Heart right ventricle (tissue), 16 donors: ENCODE measurements at regions of chr1 and their contacts with region 1.

Region 1: GRCh38 chr1:113978863-113979702 is at the start of gene OLFML3:
- DNase-seq: peak; percentile 70 to 92
- ATAC-seq: peak; percentile 66 to 83 (median 74)
- H3K4me3 ChIP-seq: peak within 1 kb of the TSS in 9 of 10 donors; percentile 10 to 48 (median 44)
- H3K27ac ChIP-seq: peak within 1 kb of the TSS in 9 of 10 donors; percentile 14 to 76 (median 61)
- H3K4me1 ChIP-seq: peaks cover 0 to 75% (median 69%) of the 10 kb centered on the region in 9 donors
- H3K27me3 ChIP-seq: no peaks in the 10 kb centered on the region
- CTCF ChIP-seq: peak; percentile 40 to 87 (median 74)
- total RNA-seq, gene OLFML3: 6.1 to 19.7 (median 11.0) TPM

Region 2: DNA sequence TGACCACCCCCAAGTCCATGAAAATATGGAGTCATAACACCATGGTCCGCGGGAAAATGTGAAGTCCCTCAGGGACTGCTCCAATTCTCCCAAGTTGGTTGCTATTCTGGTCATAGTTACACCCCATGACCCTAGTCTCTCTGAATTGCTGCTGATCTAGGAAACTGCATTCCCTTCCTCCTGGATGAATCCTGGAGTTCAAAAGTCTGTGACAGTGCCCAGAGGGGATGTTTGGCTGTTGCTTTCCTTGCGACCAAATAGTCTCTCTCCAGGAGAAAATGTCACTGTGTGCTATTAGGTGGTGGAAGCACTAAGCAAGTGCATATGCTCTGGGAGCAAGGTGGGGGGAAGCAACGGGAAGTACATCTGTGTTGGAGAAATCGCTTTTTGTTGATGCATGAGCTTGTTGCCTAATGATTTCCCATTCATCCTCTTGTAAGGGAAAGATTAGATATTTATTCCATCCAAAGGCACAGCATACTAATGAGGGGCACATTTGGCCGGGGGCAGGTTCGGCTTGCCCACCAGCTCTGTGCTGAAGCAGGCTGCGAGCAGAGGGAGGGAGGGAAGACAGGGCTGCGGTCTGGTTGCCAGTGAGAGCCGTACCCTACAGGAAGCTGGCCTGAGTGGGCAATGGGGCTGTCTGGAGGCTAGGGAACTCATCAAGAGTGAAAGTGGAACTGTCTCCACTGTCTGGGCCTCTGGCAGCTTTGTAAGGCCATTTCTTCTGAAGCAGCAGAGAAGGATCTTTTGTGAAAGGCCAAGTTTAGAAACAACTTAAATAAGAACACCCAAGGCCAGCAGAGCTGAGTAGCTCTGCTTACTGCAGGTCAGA is 147.4 kb after region 1 on chr1:
- intact Hi-C with region 1: loop called in 1 of 10 experiments (anchors 10 kb)
- DNase-seq: no peak
- ATAC-seq: peak in 5 of 8 donors; percentile 30 to 61 (median 44)
- H3K4me3 ChIP-seq: no peak overlapping the region
- H3K27ac ChIP-seq: peak overlapping the region in 1 of 10 donors; percentile 71
- H3K4me1 ChIP-seq: peaks cover 0 to 40% (median 0%) of the 10 kb centered on the region in 9 donors
- H3K27me3 ChIP-seq: no peaks in the 10 kb centered on the region
- CTCF ChIP-seq: no peak

Region 3: DNA sequence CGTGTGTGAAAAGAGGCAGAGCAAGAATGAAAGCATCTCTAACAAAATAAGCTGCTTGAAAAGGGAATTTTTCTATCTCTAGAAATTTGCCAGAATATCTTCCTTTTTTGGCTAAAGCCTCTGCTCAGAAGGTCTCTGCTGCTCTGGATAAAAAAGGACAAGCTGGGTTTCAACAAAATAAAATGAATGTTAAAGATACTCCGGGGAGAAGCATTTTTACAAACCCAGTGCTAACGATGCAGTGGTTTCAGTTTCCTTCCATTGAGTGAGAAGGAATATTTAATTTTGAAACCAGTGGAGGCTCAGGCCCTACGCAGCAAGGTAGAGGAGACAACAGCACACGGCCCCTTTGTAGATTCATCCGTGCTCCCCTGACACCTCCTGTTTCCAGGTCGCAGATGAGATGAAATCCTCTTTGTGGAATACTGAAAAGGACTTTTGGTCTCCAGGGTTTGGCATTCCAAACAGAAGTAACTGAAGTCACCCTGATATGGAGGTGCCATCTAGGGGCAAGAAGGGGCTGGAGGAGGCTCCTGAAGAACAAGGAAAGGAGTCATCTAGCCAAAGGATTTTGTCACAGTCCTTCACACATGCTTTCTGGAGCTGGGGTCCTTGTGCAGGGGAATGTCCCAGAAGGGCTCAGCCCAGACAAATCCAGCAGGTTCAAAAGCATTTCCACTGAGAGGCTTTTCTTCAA is 240.2 kb after region 1 on chr1:
- intact Hi-C with region 1: loop called in 1 of 10 experiments (anchors 5 kb)
- DNase-seq: no peak
- ATAC-seq: peak in 1 of 8 donors; percentile 23
- H3K4me3 ChIP-seq: peak overlapping the region in 6 of 10 donors; percentile 16 to 31 (median 22)
- H3K27ac ChIP-seq: peak overlapping the region in 2 of 10 donors; percentile 9 to 13
- H3K4me1 ChIP-seq: peaks cover 0 to 17% (median 2%) of the 10 kb centered on the region in 9 donors
- H3K27me3 ChIP-seq: no peaks in the 10 kb centered on the region
- CTCF ChIP-seq: peak in 4 of 9 donors; percentile 6 to 28 (median 20)